ENCODE measurements at regions of chr7 and their contacts with region 1.

Region 1: GRCh38 chr7:55641273-55641691 is 69.0 kb upstream of the VOPP1 start:
- DNase-seq: peak; percentile 90
- H3K4me3 ChIP-seq: no peak overlapping the region
- H3K27ac ChIP-seq: no peak overlapping the region
- H3K4me1 ChIP-seq: 0 out of 2 replicates have a peak, but pooled peaks cover 4% of the 10 kb centered on the region
- H3K27me3 ChIP-seq: no peaks in the 10 kb centered on the region

Region 2: DNA sequence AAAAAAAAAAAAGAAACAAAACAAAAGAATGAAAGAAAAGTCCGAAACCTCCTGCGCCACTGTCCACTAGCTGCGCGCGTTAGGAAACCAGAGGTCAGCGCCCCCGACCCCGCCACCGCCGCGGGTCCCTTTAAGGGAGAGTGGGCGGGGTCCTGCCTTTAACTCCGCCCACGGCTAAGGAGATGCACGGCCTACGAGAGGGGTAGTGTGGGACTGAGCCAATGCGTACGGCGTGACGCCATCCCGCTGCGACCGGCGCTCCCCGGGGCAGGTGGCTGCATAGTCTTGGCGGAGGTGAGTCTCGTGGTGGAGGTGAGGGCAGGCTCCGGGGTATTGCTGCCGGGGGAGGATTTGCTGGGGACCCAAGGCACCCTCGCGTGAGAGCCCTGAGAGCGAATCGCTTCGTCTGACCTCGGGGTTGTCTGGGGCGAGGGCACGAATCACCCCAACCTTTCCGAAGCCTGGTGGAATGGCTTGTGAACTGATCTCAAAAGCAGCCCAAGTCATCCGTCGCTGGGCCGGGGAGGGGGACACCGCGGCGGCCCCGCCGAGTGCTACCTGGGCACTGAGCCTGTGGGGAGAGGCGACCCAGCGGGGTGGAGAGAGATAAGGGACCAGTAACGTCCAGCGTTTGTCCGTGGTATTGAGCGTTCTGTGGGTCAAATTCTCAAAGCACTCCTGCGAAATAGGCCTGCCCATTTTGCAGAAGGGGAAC is 310.5 kb after region 1 on chr7 and contains the start of gene MRPS17:
- in situ Hi-C with region 1: loop called (anchors 25 kb)
- DNase-seq: peak; percentile 93
- H3K4me3 ChIP-seq: peak within 1 kb of the TSS; percentile 100
- H3K27ac ChIP-seq: peak within 1 kb of the TSS; percentile 27; the same call in 1 of the 2 replicates
- H3K4me1 ChIP-seq: no peaks in the 10 kb centered on the region
- H3K27me3 ChIP-seq: no peaks in the 10 kb centered on the region
- total RNA-seq, gene MRPS17: 10.3 and 10.4 TPM in 2 replicates

Region 3: DNA sequence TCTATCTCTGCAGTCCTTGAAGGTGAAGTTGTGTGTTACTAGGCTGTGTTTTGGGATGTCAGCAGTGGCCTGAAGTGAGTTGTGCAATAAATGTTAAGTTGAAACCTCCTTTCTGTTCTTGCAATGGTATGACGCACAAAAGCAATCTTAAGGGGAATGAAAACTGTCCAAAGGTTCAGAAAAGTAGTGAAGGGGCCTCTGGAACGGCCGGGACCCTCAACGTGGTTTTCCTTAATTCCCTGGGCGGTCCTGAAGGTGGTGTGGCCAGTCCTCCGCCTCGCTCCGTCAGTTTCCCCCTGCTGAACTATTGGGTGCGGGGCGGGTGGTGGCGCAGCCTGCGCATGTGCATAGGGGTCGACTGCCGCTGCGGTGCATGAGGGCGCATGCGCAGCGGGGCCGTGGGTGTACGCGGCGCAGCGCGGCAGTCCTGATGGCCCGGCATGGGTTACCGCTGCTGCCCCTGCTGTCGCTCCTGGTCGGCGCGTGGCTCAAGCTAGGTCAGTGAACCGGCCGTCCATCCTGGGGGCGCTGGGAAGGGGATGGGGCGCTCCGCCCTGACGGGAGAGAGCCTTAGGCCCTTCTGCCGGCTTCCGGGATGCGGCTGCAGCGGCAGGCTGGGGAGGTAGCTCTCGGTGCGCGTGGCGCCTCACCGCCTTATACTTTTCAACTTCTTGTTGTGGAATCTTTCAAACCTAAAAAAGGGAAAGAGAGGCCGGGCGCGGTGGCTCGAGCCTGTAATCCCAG is 422.8 kb after region 1 on chr7 and contains the start of gene SUMF2:
- in situ Hi-C with region 1: no loop called
- DNase-seq: peak; percentile 96
- H3K4me3 ChIP-seq: peak within 1 kb of the TSS; percentile 89
- H3K27ac ChIP-seq: peak within 1 kb of the TSS; percentile 86
- H3K4me1 ChIP-seq: peaks cover 31% of the 10 kb centered on the region
- H3K27me3 ChIP-seq: no peaks in the 10 kb centered on the region
- total RNA-seq, gene SUMF2: 186 and 206 TPM in 2 replicates

Region 4: DNA sequence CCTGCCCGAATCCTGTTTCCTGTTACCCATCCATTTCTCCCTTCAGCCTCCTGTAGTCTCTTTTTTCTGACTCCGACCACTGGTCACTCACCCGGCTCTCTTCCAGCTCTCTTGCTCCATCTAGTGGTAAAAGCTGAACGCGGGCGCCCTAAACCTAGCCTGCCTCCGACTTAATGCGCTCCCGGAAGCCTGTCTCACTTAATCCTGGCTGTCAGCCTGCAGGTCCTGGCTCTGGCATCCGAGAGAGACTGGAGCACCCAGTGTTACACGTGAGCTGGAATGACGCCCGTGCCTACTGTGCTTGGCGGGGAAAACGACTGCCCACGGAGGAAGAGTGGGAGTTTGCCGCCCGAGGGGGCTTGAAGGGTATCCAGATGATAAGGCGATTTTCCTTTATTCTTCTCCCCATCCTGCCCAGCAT is 433.1 kb after region 1 on chr7:
- in situ Hi-C with region 1: loop called (anchors 10 kb)
- DNase-seq: peak; percentile 88
- H3K4me3 ChIP-seq: no peak overlapping the region
- H3K27ac ChIP-seq: no peak overlapping the region
- H3K4me1 ChIP-seq: peaks cover 4% of the 10 kb centered on the region; the same call in 1 of the 2 replicates
- H3K27me3 ChIP-seq: no peaks in the 10 kb centered on the region

Measured in GM23248 (cell line).